Activated CD4-positive, alpha-beta T cell treated with anti-CD3 and anti-CD28 coated beads, Interleukin-2, amount 10 ng/mL, durations not matched to agents 24 days and 14 days (primary cell): ENCODE measurements at regions of chr13 and their contacts with region 1.

Region 1: GRCh38 chr13:32586080-32586900 is at the start of gene PDS5B:
- DNase-seq: peak; percentile 98
- H3K4me3 Mint-ChIP-seq: peak within 1 kb of the TSS; percentile 86
- H3K27ac Mint-ChIP-seq: peak within 1 kb of the TSS; percentile 95
- H3K4me1 Mint-ChIP-seq: peaks cover 36% of the 10 kb centered on the region
- H3K27me3 Mint-ChIP-seq: peaks cover 9% of the 10 kb centered on the region
- total RNA-seq, gene PDS5B: 60.3 and 70.2 TPM in 2 replicates

Region 2: DNA sequence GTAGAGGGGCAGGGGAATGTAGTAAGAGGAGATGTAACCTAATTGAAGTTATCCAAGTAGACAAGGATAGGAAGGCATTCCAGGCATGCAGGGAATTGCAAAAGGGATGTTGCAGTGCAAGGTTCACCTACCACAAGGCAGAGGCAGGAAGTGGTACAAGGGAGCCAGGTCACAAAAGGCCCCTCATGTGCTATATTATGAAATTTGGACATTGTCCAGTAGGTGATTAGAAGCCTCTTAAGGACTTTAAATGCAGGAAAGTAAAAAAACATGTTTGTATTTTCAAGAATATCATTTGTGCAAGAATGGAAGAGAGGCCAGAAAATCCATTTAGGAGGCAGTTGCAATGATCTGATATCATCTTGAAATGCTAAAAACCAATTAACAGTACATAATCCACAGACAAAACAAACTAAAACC is 443.3 kb before region 1 on chr13:
- intact Hi-C with region 1: no loop called
- DNase-seq: peak; percentile 41
- H3K4me3 Mint-ChIP-seq: no peak overlapping the region
- H3K27ac Mint-ChIP-seq: no peak overlapping the region
- H3K4me1 Mint-ChIP-seq: no peaks in the 10 kb centered on the region
- H3K27me3 Mint-ChIP-seq: no peaks in the 10 kb centered on the region

Region 3: GRCh38 chr13:32315238-32316027 is 270.9 kb before region 1 on chr13 and contains the starts of genes BRCA2 and ZAR1L:
- intact Hi-C with region 1: loop called (anchors 5 kb)
- DNase-seq: peak; percentile 97
- H3K4me3 Mint-ChIP-seq: peak within 1 kb of the TSS; percentile 96
- H3K27ac Mint-ChIP-seq: peak within 1 kb of the TSS; percentile 100
- H3K4me1 Mint-ChIP-seq: peaks cover 24% of the 10 kb centered on the region
- H3K27me3 Mint-ChIP-seq: no peaks in the 10 kb centered on the region
- total RNA-seq, gene BRCA2: 23.1 and 24.7 TPM in 2 replicates
- total RNA-seq, gene ZAR1L: 0.19 TPM in 1 of 2 replicates, not detected in the other

Region 4: DNA sequence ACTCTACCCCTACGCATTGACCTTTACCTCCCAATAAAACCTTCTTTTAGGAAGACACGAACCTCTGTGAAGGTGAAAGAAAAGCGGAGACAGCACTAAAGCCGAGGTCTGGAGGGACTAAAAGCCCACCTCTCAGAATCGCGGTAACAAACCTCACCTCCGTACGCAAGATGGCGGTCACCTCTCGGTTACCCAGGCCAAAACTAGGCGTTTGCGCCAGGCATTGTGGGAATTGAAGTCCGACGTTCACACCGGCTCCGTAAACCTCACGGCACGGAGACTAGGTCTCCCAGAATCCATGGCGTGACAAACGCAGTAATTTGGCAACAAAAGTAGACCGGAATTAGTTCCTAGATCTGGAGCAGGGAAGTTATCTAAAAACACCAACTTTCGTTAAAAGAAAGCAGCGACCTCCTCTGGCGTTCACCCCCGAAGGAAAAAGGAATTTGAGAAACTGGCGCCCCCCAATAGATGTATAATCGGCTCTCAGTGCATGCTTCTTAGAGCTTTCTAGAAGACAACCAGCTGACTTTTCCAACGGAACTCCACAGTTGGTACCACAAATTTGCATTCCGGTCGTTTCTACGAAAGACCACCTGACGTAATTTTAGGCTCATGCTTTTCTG is 47.6 kb before region 1 on chr13 and contains the start of gene N4BP2L2:
- intact Hi-C with region 1: loop called (anchors 1 kb)
- DNase-seq: peak; percentile 97
- H3K4me3 Mint-ChIP-seq: peak within 1 kb of the TSS; percentile 98
- H3K27ac Mint-ChIP-seq: peak within 1 kb of the TSS; percentile 99
- H3K4me1 Mint-ChIP-seq: peaks cover 37% of the 10 kb centered on the region
- H3K27me3 Mint-ChIP-seq: peaks cover 8% of the 10 kb centered on the region
- total RNA-seq, gene N4BP2L2: 87.5 and 88.0 TPM in 2 replicates

Region 5: GRCh38 chr13:32650705-32651311 is 64.5 kb after region 1 on chr13:
- intact Hi-C with region 1: loop called (anchors 1 kb)
- DNase-seq: peak; percentile 87
- H3K4me3 Mint-ChIP-seq: no peak overlapping the region
- H3K27ac Mint-ChIP-seq: no peak overlapping the region
- H3K4me1 Mint-ChIP-seq: peaks cover 29% of the 10 kb centered on the region
- H3K27me3 Mint-ChIP-seq: no peaks in the 10 kb centered on the region

Region 6: DNA sequence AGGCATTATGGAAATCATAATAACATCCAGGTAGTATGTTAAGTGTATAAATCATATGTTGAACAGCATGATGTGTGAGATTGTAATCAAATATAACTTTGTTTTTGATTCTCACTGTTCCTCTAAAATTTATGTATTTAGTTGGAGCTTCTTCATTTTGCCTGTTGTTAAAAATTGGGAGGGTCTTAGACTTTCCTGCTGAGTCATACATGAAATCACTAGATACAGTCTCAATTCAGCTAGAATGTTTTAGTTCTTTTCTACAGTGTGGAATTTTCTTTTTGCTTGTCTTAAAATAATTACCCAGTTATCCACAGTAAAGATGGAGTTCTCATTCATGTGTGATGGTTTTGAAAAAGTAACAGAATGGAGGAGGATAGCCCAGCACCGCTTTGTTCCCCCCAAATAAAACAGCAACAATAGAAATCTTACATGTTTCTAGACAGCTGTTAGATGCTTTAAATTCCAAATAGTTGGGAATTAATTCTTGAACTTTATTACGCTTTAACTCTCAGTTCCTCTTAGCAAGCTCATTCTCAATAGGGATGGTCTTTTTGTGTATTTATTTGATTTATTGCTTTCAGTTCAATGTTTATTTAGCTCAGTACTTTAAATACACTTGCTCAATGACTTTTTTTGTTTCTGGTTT is 109.4 kb after region 1 on chr13:
- intact Hi-C with region 1: no loop called
- DNase-seq: no peak
- H3K4me3 Mint-ChIP-seq: no peak overlapping the region
- H3K27ac Mint-ChIP-seq: no peak overlapping the region
- H3K4me1 Mint-ChIP-seq: no peaks in the 10 kb centered on the region
- H3K27me3 Mint-ChIP-seq: no peaks in the 10 kb centered on the region

Region 7: GRCh38 chr13:32791545-32792172 is 205.4 kb after region 1 on chr13:
- intact Hi-C with region 1: loop called (anchors 10 kb)
- DNase-seq: peak; percentile 87
- H3K4me3 Mint-ChIP-seq: peak overlapping the region; percentile 54
- H3K27ac Mint-ChIP-seq: peak overlapping the region; percentile 46
- H3K4me1 Mint-ChIP-seq: peaks cover 43% of the 10 kb centered on the region
- H3K27me3 Mint-ChIP-seq: no peaks in the 10 kb centered on the region

Region 8: GRCh38 chr13:33017323-33017929 is 431.1 kb after region 1 on chr13:
- intact Hi-C with region 1: loop called (anchors 1 kb)
- DNase-seq: peak; percentile 84
- H3K4me3 Mint-ChIP-seq: peak overlapping the region; percentile 76
- H3K27ac Mint-ChIP-seq: peak overlapping the region; percentile 68
- H3K4me1 Mint-ChIP-seq: peaks cover 11% of the 10 kb centered on the region
- H3K27me3 Mint-ChIP-seq: peaks cover 59% of the 10 kb centered on the region

Region 9: GRCh38 chr13:33723772-33724435 is 1137.6 kb after region 1 on chr13:
- intact Hi-C with region 1: loop called (anchors 5 kb)
- DNase-seq: peak; percentile 90
- H3K4me3 Mint-ChIP-seq: no peak overlapping the region
- H3K27ac Mint-ChIP-seq: peak overlapping the region; percentile 76
- H3K4me1 Mint-ChIP-seq: peaks cover 26% of the 10 kb centered on the region
- H3K27me3 Mint-ChIP-seq: no peaks in the 10 kb centered on the region